Sigmoid colon (tissue), 7 donors: ENCODE measurements at regions of chr14 and their contacts with region 1.

Region 1: GRCh38 chr14:100850841-100851585 is 25.1 kb downstream of the MEG3 start:
- DNase-seq: peak; percentile 83
- H3K4me3 ChIP-seq: no peak overlapping the region
- H3K27ac ChIP-seq: no peak overlapping the region
- H3K4me1 ChIP-seq: no peaks in the 10 kb centered on the region
- H3K27me3 ChIP-seq: no peaks in the 10 kb centered on the region
- CTCF ChIP-seq: peak; percentile 55 to 76 (median 72)
- EP300 ChIP-seq: no peak
- POLR2A ChIP-seq: no peak

Region 2: GRCh38 chr14:99995700-99996356 is 855.2 kb before region 1 on chr14:
- intact Hi-C with region 1: no loop called
- DNase-seq: peak; percentile 71
- H3K4me3 ChIP-seq: no peak overlapping the region
- H3K27ac ChIP-seq: no peak overlapping the region
- H3K4me1 ChIP-seq: no peaks in the 10 kb centered on the region
- H3K27me3 ChIP-seq: no peaks in the 10 kb centered on the region
- CTCF ChIP-seq: peak; percentile 13 to 76 (median 62)
- EP300 ChIP-seq: no peak
- POLR2A ChIP-seq: no peak

Region 3: DNA sequence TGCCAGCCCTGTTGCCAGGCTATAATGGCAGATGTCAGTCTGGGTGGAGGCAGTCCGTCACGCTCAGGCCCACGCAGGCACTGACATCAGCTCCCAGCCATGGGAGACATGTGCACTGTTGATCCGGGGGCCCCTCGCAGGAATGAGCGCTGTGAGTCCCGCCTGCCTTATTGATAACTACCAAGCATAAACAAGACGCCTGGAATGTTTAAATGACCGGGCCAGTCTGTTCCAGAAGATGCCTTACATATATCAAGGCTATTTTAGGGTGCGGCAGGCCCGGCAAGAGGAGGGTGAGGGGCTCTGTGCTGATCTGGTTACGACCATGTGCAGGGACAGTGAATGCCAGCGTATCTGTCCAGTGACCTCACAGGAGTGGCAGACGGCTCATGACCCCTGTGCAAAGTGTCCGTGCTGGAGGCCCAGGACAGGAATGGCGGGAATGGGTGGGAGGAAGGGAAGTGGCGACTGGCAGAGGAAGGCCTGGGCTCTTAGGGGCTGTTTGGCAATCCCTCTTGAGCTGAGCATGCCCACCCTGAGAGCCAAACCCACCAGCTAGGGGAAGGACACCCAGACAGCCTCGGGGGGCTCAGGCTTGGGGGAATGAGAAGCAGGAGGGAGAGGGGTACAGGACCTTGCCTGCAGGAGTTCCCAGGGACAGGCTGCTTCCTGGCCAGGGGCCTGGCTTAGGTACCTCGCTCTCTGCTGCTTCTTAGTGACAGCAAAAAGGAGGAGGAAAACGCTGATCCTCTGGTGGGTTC is 75.0 kb before region 1 on chr14:
- intact Hi-C with region 1: no loop called
- DNase-seq: peak; percentile 43
- H3K4me3 ChIP-seq: no peak overlapping the region
- H3K27ac ChIP-seq: no peak overlapping the region
- H3K4me1 ChIP-seq: no peaks in the 10 kb centered on the region
- H3K27me3 ChIP-seq: peaks cover 0 to 2% (median 0%) of the 10 kb centered on the region in 3 donors
- CTCF ChIP-seq: no peak
- EP300 ChIP-seq: no peak
- POLR2A ChIP-seq: no peak

Region 4: GRCh38 chr14:100803226-100803625 is 47.8 kb before region 1 on chr14:
- intact Hi-C with region 1: no loop called
- DNase-seq: no peak
- H3K4me3 ChIP-seq: no peak overlapping the region
- H3K27ac ChIP-seq: no peak overlapping the region
- H3K4me1 ChIP-seq: no peaks in the 10 kb centered on the region
- H3K27me3 ChIP-seq: no peaks in the 10 kb centered on the region
- CTCF ChIP-seq: no peak
- EP300 ChIP-seq: no peak
- POLR2A ChIP-seq: no peak

Region 5: GRCh38 chr14:100900837-100901390 is 49.9 kb after region 1 on chr14:
- intact Hi-C with region 1: no loop called
- DNase-seq: peak; percentile 66
- H3K4me3 ChIP-seq: no peak overlapping the region
- H3K27ac ChIP-seq: no peak overlapping the region
- H3K4me1 ChIP-seq: peaks cover 0 to 30% (median 13%) of the 10 kb centered on the region in 4 donors
- H3K27me3 ChIP-seq: peaks cover 4 to 84% (median 49%) of the 10 kb centered on the region in 3 donors
- CTCF ChIP-seq: peak in 1 of 4 experiments; percentile 4
- EP300 ChIP-seq: no peak
- POLR2A ChIP-seq: no peak

Region 6: DNA sequence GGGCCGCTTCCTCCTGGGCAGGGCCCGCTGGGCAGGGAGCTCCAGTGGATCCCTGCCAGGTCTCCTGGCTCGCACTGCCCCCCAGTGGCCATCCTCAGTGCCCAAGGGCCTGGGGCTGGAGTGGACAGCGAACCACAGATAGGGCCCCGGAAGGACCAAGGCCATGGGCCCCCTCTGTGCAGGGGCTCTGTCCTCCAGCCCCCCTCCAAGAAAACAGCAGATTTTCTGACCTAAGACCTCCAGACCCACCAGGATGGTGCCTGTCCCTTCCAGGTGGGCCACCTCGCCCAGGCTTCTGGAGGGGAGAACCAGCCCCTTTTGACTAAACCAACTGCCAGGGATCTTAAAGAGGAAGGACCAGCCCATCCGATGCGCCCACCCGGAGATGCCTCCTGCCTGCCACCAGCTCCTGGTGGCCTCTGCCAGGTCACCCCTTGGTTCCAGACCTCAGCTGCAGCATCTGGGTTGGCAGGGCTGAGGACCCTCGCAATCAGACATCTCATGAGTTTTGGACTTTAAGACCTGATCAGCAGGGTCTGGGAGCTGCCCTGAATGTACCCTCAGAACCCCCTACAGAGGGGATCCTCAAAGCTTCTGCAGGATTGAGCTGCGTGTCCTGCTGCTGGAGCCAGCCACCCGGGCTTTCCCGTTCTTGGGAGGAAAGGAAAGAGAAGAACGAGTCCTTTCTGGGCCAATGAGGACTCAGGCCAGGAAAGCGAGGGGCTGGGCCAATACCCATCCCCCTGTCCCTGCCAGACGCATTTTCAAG is 384.5 kb after region 1 on chr14:
- intact Hi-C with region 1: loop called (anchors 10 kb)
- DNase-seq: peak; percentile 79
- H3K4me3 ChIP-seq: no peak overlapping the region
- H3K27ac ChIP-seq: no peak overlapping the region
- H3K4me1 ChIP-seq: peaks cover 0 to 13% (median 11%) of the 10 kb centered on the region in 4 donors
- H3K27me3 ChIP-seq: no peaks in the 10 kb centered on the region
- CTCF ChIP-seq: peak; percentile 42 to 70 (median 64)
- EP300 ChIP-seq: no peak
- POLR2A ChIP-seq: no peak